Activated CD4-positive, alpha-beta T cell treated with anti-CD3 and anti-CD28 coated beads for 36 hours (primary cell): ENCODE measurements at regions of chr3 and their contacts with region 1.

Region 1: DNA sequence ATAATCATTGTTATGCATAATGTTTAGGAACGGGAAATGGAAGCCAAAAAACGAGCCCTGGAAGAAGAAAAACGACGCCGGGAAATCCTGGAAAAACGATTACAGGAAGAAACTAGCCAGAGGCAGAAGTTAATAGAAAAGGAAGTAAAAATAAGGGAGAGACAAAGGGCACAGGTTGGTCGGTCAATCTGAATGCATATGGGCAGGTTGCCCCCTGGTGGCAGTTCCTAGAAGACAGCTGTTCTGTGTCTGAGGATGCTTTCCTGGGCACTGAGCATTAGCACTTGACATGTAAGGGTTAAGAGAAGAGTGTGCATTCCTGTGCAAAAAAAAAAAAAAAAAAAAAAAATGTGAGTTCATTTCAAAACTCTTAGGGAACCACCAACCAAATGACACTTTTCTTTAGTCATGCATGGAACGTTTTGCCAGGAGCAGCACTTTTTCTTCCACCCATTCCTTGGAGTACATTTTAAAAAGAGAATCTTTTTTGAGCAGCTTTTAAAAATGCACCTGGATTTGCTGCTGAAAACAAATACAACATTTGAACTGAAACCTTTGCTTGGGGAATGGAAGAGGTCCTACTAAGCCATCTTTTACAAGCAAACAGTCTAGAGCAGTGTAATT is 11.1 kb upstream of the ABHD10 start:
- DNase-seq: peak; percentile 90
- ATAC-seq: peak; percentile 85
- H3K4me3 Mint-ChIP-seq: no peak overlapping the region
- H3K27ac Mint-ChIP-seq: no peak overlapping the region
- H3K4me1 Mint-ChIP-seq: peaks cover 28% of the 10 kb centered on the region
- H3K27me3 Mint-ChIP-seq: no peaks in the 10 kb centered on the region

Region 2: GRCh38 chr3:111708157-111708771 is 259.5 kb before region 1 on chr3:
- CTCF ChIA-PET with region 1: interaction called, 10 read pairs
- POLR2A ChIA-PET with region 1: no interaction called
- intact Hi-C with region 1: no loop called
- DNase-seq: no peak
- ATAC-seq: no peak
- H3K4me3 Mint-ChIP-seq: no peak overlapping the region
- H3K27ac Mint-ChIP-seq: no peak overlapping the region
- H3K4me1 Mint-ChIP-seq: peaks cover 33% of the 10 kb centered on the region
- H3K27me3 Mint-ChIP-seq: no peaks in the 10 kb centered on the region

Region 3: DNA sequence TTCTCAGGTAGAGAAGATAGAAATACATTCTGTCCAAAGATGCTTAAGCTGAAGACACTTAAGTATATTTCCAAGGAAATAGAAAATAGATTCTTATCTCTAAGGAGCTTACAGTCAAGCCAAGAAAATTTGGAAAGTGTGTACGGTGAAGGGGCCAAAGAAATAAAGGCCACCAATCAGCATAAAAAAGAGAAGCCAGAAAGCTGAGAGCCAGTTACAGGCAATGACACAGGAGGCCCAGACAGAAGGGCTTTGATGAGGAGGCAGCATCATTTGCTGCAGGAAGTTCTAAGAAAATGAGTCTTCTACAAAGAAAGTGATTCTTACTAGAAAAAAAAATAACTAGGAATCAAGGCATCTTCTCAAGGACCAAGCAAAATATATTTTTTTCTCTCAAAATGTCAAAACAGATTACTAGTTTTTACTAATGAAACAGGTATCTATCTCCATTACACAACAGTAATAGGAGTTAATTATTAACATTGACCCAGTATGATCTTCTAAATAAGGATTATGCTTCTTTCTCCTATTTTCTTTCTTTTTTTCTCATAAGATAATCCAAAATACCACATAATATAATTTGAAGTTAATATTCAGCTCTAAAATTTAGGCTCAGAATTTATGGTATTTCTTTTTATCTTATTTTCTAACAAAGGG is 190.8 kb before region 1 on chr3:
- CTCF ChIA-PET with region 1: no interaction called
- POLR2A ChIA-PET with region 1: no interaction called
- intact Hi-C with region 1: no loop called
- DNase-seq: no peak
- ATAC-seq: no peak
- H3K4me3 Mint-ChIP-seq: no peak overlapping the region
- H3K27ac Mint-ChIP-seq: no peak overlapping the region
- H3K4me1 Mint-ChIP-seq: no peaks in the 10 kb centered on the region
- H3K27me3 Mint-ChIP-seq: no peaks in the 10 kb centered on the region

Region 4: DNA sequence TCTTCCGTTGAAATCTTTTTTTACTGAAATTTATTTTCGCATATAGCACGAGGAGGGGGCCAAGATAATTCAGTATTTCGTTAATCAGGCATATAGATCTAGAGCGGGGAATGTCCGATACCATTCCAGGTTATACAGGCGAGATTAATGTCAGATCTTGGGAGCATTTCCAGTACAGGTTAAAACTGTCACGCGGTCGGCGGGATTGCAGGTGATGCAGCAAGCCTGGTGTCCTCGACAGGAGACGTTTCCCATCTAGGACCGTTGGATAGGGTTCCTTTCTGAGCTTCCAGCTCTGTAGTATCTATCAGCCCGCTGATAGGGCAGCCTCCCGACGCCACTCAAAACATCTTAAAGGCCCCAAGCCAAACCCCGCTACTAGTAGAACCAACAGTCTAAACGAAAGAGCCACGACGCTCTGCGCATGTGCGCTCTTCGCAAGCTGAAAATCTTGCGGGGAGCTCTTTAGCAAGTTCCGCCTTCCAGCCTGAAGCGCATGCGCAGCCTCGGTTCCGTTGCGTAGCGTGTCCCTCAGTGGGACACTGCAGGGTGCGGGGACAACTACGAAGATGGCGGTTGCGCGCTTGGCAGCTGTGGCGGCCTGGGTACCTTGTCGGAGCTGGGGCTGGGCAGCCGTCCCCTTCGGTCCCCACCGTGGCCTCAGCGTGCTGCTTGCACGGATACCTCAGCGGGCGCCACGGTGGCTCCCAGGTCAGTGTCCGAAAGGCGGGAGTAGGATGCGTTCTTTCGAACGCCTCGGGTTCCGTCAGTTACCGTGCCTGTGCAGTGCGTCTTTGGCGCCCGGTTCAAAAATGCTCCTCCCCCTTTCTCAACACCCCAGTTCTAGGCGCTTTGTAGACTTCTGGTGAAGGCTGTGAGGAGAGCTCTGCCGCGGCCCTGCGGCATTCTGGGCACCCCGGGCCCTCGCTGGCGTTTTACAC is 11.0 kb after region 1 on chr3 and contains the start of gene ABHD10:
- CTCF ChIA-PET with region 1: interaction called, 21 read pairs
- POLR2A ChIA-PET with region 1: interaction called, 3 read pairs
- intact Hi-C with region 1: no loop called
- DNase-seq: peak; percentile 98
- ATAC-seq: peak; percentile 97
- H3K4me3 Mint-ChIP-seq: peak within 1 kb of the TSS; percentile 87
- H3K27ac Mint-ChIP-seq: peak within 1 kb of the TSS; percentile 93
- H3K4me1 Mint-ChIP-seq: peaks cover 40% of the 10 kb centered on the region
- H3K27me3 Mint-ChIP-seq: no peaks in the 10 kb centered on the region
- total RNA-seq, gene ABHD10: 58.7 to 64.1 TPM

Region 5: DNA sequence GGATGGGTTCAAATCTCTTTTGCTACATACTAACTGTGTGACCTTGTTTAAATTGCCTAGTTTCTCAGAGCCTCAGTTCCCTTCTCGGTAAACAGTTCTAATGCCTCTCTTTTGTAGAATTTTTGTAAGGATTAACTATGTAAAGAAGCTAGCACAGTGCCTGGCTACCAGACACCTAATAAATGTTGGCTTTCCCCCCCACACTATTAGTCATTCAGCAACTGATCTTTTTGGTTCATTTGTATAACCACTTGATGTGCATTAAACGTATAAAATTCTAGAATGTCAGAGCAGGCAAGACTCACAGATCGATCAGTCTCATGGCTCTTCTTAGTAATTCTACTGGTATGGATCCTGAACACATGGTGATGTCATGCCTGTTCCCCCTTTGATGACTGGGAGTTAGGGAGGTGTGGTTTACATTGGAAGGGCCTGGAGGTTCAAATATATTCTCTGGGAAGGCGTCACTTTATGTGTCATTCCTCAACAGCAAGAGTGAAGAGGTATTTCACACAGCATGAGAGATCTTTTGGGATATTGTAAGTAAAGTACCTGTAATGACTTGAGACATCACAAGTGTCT is 37.4 kb after region 1 on chr3:
- CTCF ChIA-PET with region 1: interaction called, 10 read pairs
- POLR2A ChIA-PET with region 1: no interaction called
- intact Hi-C with region 1: no loop called
- DNase-seq: no peak
- ATAC-seq: peak; percentile 10
- H3K4me3 Mint-ChIP-seq: no peak overlapping the region
- H3K27ac Mint-ChIP-seq: peak overlapping the region; percentile 74
- H3K4me1 Mint-ChIP-seq: peaks cover 51% of the 10 kb centered on the region
- H3K27me3 Mint-ChIP-seq: no peaks in the 10 kb centered on the region